ENCODE measurements at regions of chr11 and their contacts with region 1.

Region 1: GRCh38 chr11:7936615-7937014 is 4.9 kb downstream of the OR10A3 start:
- DNase-seq: peak; percentile 82 to 91
- H3K4me3 ChIP-seq: no peak overlapping the region
- H3K27ac ChIP-seq: peak overlapping the region; percentile 40
- H3K4me1 ChIP-seq: peaks cover 19% of the 10 kb centered on the region
- H3K27me3 ChIP-seq: no peaks in the 10 kb centered on the region
- CTCF ChIP-seq: no peak

Region 2: DNA sequence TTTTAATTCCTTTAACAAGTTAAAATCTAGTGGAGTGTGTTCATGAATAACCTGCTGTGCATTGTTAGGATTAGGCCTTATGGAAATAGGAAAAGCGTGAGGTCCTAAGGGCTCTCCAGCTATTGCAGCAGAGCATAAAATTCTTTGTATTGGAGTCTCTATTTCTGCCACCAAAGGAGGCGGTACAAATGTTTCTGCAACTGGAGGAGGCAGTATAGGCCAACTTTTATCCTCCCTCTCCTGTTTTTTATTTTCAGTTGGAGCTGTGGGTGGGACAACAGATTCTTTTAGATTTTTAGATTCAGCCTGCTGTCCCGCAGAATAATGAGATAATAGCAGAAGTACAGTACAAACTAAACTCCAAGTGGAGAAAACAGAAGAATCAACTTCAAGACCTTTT is 31.7 kb before region 1 on chr11:
- CTCF ChIA-PET with region 1: no interaction called
- POLR2A ChIA-PET with region 1: no interaction called
- intact Hi-C with region 1: loop called (anchors 1 kb)
- DNase-seq: no peak
- H3K4me3 ChIP-seq: peak overlapping the region; percentile 73
- H3K27ac ChIP-seq: peak overlapping the region; percentile 97
- H3K4me1 ChIP-seq: peaks cover 89% of the 10 kb centered on the region
- H3K27me3 ChIP-seq: no peaks in the 10 kb centered on the region
- CTCF ChIP-seq: peak; percentile 45; the same call in 1 of the 2 replicates

Region 3: GRCh38 chr11:7964873-7965272 is 28.3 kb after region 1 on chr11:
- CTCF ChIA-PET with region 1: no interaction called
- POLR2A ChIA-PET with region 1: no interaction called
- intact Hi-C with region 1: loop called (anchors 1 kb)
- DNase-seq: no peak
- H3K4me3 ChIP-seq: no peak overlapping the region
- H3K27ac ChIP-seq: peak overlapping the region; percentile 39; the same call in 1 of the 2 replicates
- H3K4me1 ChIP-seq: peaks cover 14% of the 10 kb centered on the region
- H3K27me3 ChIP-seq: no peaks in the 10 kb centered on the region
- CTCF ChIP-seq: no peak

Region 4: GRCh38 chr11:7977232-7977917 is 40.8 kb after region 1 on chr11:
- CTCF ChIA-PET with region 1: interaction called, 3 read pairs
- POLR2A ChIA-PET with region 1: no interaction called
- intact Hi-C with region 1: loop called (anchors 2 kb)
- DNase-seq: peak; percentile 26 to 88
- H3K4me3 ChIP-seq: peak overlapping the region; percentile 35; the same call in 1 of the 2 replicates
- H3K27ac ChIP-seq: peak overlapping the region; percentile 91
- H3K4me1 ChIP-seq: peaks cover 39% of the 10 kb centered on the region
- H3K27me3 ChIP-seq: no peaks in the 10 kb centered on the region
- CTCF ChIP-seq: no peak

Region 5: GRCh38 chr11:7994581-7995278 is 58.1 kb after region 1 on chr11:
- CTCF ChIA-PET with region 1: no interaction called
- POLR2A ChIA-PET with region 1: interaction called, 10 read pairs
- intact Hi-C with region 1: no loop called
- DNase-seq: no peak
- H3K4me3 ChIP-seq: no peak overlapping the region
- H3K27ac ChIP-seq: no peak overlapping the region
- H3K4me1 ChIP-seq: no peaks in the 10 kb centered on the region
- H3K27me3 ChIP-seq: no peaks in the 10 kb centered on the region
- CTCF ChIP-seq: no peak